PC-9 (cell line): ENCODE measurements at regions of chr6 and their contacts with region 1.

Region 1: GRCh38 chr6:111259089-111259831 is 172.0 kb downstream of the SLC16A10 start:
- DNase-seq: peak; percentile 97 to 98
- H3K4me3 ChIP-seq: peak overlapping the region; percentile 84
- H3K27ac ChIP-seq: peak overlapping the region; percentile 58; the same call in 1 of the 2 replicates
- H3K4me1 ChIP-seq: peaks cover 34% of the 10 kb centered on the region
- H3K27me3 ChIP-seq: no peaks in the 10 kb centered on the region
- CTCF ChIP-seq: peak; percentile 96

Region 2: GRCh38 chr6:111057074-111057752 is 202.0 kb before region 1 on chr6:
- CTCF ChIA-PET with region 1: no interaction called
- POLR2A ChIA-PET with region 1: no interaction called
- intact Hi-C with region 1: loop called (anchors 2 kb)
- DNase-seq: no peak
- H3K4me3 ChIP-seq: no peak overlapping the region
- H3K27ac ChIP-seq: no peak overlapping the region
- H3K4me1 ChIP-seq: no peaks in the 10 kb centered on the region
- H3K27me3 ChIP-seq: no peaks in the 10 kb centered on the region
- CTCF ChIP-seq: peak; percentile 86

Region 3: GRCh38 chr6:111483736-111484632 is 224.7 kb after region 1 on chr6:
- CTCF ChIA-PET with region 1: interaction called, 15 read pairs
- POLR2A ChIA-PET with region 1: no interaction called
- intact Hi-C with region 1: loop called (anchors 1 kb)
- DNase-seq: peak; percentile 75 to 88
- H3K4me3 ChIP-seq: peak overlapping the region; percentile 66
- H3K27ac ChIP-seq: peak overlapping the region; percentile 90
- H3K4me1 ChIP-seq: peaks cover 42% of the 10 kb centered on the region
- H3K27me3 ChIP-seq: no peaks in the 10 kb centered on the region
- CTCF ChIP-seq: no peak

Region 4: GRCh38 chr6:111709615-111710398 is 450.5 kb after region 1 on chr6:
- CTCF ChIA-PET with region 1: no interaction called
- POLR2A ChIA-PET with region 1: no interaction called
- intact Hi-C with region 1: loop called (anchors 1 kb)
- DNase-seq: peak; percentile 54 to 56
- H3K4me3 ChIP-seq: no peak overlapping the region
- H3K27ac ChIP-seq: no peak overlapping the region
- H3K4me1 ChIP-seq: 0 out of 2 replicates have a peak, but pooled peaks cover 5% of the 10 kb centered on the region
- H3K27me3 ChIP-seq: no peaks in the 10 kb centered on the region
- CTCF ChIP-seq: peak; percentile 91

Region 5: DNA sequence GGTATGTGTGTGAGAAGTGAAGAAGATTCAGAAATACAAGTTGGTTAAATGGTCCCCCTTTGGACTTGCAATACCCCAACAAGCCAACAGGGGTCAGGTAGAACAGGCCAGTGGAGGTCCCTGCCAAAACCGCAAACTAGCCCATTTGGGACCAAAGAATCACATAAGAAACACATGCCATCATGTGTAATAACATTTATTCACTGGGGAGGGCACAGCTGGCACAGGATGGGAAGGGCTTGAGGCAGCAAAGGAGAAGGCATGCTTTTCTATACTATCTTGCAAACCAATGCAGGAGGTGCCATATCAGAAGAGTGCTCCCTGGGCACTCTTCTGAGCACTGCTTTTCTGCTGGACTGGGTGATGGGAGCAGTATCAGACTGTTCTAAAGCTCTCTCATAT is 462.5 kb after region 1 on chr6:
- CTCF ChIA-PET with region 1: no interaction called
- POLR2A ChIA-PET with region 1: no interaction called
- intact Hi-C with region 1: no loop called
- DNase-seq: no peak
- H3K4me3 ChIP-seq: no peak overlapping the region
- H3K27ac ChIP-seq: no peak overlapping the region
- H3K4me1 ChIP-seq: peaks cover 12% of the 10 kb centered on the region
- H3K27me3 ChIP-seq: no peaks in the 10 kb centered on the region
- CTCF ChIP-seq: peak; percentile 78